ENCODE measurements at regions of chr11 and their contacts with region 1.

Region 1: DNA sequence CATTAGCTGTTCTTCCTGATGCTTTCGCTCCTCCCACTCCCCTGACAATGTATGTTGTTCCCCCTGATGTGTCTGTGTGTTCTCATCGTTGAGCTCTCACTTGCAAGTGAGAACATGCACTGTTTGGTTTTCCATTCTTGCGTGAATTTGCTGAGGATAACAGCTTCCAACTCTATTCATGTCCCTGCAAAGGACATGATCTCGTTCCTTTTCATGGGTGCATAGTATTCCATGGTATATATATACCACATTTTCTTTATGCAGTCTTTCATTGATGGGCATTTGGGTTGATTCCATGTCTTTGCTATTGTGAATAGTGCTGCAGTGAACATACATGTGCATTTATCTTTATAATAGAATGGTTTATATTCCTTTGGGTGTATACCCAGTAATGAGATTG is 58.6 kb upstream of the RRM1 start:
- DNase-seq: no peak
- ATAC-seq: no peak
- H3K4me3 Mint-ChIP-seq: no peak overlapping the region
- H3K27ac Mint-ChIP-seq: no peak overlapping the region
- H3K4me1 Mint-ChIP-seq: peaks cover 32% of the 10 kb centered on the region
- H3K27me3 Mint-ChIP-seq: no peaks in the 10 kb centered on the region

Region 2: GRCh38 chr11:3700410-3700809 is 335.6 kb before region 1 on chr11:
- CTCF ChIA-PET with region 1: no interaction called
- POLR2A ChIA-PET with region 1: no interaction called
- intact Hi-C with region 1: no loop called
- DNase-seq: no peak
- ATAC-seq: no peak
- H3K4me3 Mint-ChIP-seq: no peak overlapping the region
- H3K27ac Mint-ChIP-seq: peak overlapping the region; percentile 9
- H3K4me1 Mint-ChIP-seq: no peaks in the 10 kb centered on the region
- H3K27me3 Mint-ChIP-seq: no peaks in the 10 kb centered on the region

Region 3: GRCh38 chr11:3905080-3905953 is 130.7 kb before region 1 on chr11:
- CTCF ChIA-PET with region 1: no interaction called
- POLR2A ChIA-PET with region 1: no interaction called
- intact Hi-C with region 1: no loop called
- DNase-seq: peak; percentile 83
- ATAC-seq: peak; percentile 98
- H3K4me3 Mint-ChIP-seq: peak overlapping the region; percentile 5
- H3K27ac Mint-ChIP-seq: peak overlapping the region; percentile 55
- H3K4me1 Mint-ChIP-seq: peaks cover 77% of the 10 kb centered on the region
- H3K27me3 Mint-ChIP-seq: no peaks in the 10 kb centered on the region

Region 4: DNA sequence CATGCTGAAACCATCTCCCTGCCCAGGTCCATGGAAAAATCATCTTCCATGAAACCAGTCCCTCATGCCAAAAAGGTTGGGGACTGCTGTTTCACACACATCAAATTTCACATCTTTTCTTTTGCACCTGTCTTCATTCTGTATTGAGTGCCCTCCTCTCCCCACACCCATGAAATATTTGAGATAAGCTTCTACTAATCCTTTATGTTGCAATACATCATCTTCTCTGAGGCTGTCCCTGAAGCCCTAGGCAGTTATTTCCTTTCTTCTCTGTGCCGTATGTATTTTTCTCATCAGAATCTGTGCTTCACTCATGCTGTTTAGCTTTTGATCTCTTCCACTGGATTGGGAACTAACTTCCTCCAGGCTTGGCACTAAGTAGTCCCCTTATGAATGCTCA is 18.7 kb after region 1 on chr11:
- CTCF ChIA-PET with region 1: no interaction called
- POLR2A ChIA-PET with region 1: interaction called, 3 read pairs
- intact Hi-C with region 1: loop called in 1 of 2 experiments (anchors 2 kb)
- DNase-seq: no peak
- ATAC-seq: no peak
- H3K4me3 Mint-ChIP-seq: no peak overlapping the region
- H3K27ac Mint-ChIP-seq: peak overlapping the region; percentile 1
- H3K4me1 Mint-ChIP-seq: peaks cover 23% of the 10 kb centered on the region
- H3K27me3 Mint-ChIP-seq: no peaks in the 10 kb centered on the region